ENCODE measurements at regions of chr18 and their contacts with region 1.

Region 1: DNA sequence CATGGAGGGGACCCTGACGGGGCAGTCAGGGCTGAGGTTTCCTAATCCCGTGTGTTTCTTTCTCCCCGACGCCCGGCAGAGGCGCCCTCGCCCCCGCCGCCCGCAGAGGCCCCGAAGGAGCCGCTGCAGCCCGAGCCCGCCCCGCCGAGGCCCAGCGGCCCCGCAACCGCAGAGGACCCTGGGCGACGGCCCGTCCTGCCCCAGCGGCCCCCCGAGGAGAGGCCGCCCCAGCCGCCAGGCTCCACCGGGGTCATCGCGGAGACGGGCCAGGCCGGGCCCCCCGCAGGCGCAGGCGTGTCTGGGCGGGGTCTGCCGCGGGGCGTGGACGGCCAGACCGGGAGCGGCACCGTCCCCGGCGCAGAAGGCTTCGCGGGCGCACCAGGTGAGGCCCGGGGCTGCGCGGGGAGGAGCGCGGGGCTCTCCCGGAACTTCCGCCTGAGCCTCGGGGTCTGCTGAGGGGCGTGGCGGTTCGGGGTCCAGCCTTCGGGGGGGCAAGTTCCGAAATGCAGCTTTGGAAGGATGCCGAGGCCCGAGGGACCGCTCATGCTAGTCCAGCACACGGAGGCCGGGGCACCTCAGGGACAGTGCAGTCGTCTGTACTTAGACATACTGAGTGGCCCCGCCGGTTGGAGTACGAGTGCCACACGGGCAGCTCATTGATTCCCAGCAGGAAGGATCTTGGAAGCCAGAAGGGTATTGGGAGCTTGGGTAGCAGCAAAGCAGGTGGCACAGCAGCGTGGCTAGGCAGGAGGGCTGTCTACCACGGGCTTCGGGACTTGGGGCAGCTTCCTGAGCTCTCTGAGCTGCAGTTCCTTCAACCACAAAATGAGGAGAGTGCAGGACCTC is 60.1 kb downstream of the EMILIN2 start:
- DNase-seq: peak; percentile 48 to 73 (median 68)
- H3K4me3 ChIP-seq: peak overlapping the region; percentile 66
- H3K27ac ChIP-seq: peak overlapping the region; percentile 78 to 87
- H3K4me1 ChIP-seq: peaks cover 7% of the 10 kb centered on the region
- H3K27me3 ChIP-seq: no peaks in the 10 kb centered on the region
- CTCF ChIP-seq: peak in 2 of 3 donors; percentile 23 to 46
- EP300 ChIP-seq: no peak
- POLR2A ChIP-seq: peak; percentile 26

Region 2: GRCh38 chr18:2758309-2758708 is 148.6 kb before region 1 on chr18:
- intact Hi-C with region 1: loop called in 1 of 4 experiments (anchors 10 kb)
- DNase-seq: no peak
- H3K4me3 ChIP-seq: no peak overlapping the region
- H3K27ac ChIP-seq: no peak overlapping the region
- H3K4me1 ChIP-seq: no peaks in the 10 kb centered on the region
- H3K27me3 ChIP-seq: no peaks in the 10 kb centered on the region
- CTCF ChIP-seq: no peak
- EP300 ChIP-seq: no peak
- POLR2A ChIP-seq: no peak

Region 3: DNA sequence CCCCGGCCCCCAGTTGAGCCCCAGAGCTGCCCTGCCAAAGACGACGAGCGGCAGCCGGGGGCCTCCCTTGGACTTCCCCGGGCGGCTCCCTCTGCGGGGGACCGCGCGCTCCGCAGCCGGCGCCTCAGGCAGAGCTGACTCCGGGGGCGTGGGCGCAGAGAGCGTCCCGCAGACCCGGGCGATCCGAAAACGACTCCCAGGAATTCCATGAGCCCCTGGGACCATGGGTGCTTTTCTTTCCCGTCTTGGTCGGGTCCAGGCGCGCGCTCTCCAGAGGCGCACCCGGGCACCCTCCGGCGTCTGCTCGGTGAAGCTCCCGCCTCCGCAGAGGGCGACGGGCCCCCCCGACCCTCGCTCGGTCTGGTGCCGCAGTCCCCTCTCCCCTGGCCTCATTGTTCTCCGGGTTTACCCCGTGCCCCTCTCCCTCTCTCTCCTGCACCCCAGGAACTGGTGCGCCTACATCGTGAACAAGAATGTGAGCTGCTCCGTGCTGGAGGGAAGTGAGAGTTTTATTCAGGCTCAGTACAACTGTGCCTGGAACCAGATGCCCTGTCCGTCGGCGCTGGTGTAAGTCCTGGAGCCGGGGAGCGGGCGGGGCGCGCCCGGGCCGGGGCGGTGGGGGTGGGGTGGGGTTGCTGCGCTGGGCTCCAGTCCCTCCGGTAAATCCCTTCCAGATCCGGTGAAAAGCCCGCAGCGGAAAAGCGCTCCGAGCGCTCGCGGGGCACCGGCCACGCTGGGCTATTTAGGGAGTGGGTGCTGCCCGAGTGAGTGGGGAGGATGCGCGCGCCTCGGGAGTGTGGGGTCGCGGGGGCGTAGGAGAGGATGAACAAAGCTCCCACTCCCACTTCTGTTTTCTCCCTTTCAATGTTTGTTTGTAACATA is 59.3 kb before region 1 on chr18:
- intact Hi-C with region 1: loop called in 2 of 4 experiments (anchors 2 to 10 kb)
- DNase-seq: peak; percentile 44 to 73 (median 62)
- H3K4me3 ChIP-seq: peak overlapping the region; percentile 56
- H3K27ac ChIP-seq: peak overlapping the region; percentile 65 to 83
- H3K4me1 ChIP-seq: peaks cover 4% of the 10 kb centered on the region
- H3K27me3 ChIP-seq: no peaks in the 10 kb centered on the region
- CTCF ChIP-seq: no peak
- EP300 ChIP-seq: no peak
- POLR2A ChIP-seq: no peak

Region 4: GRCh38 chr18:2857491-2858131 is 49.3 kb before region 1 on chr18:
- intact Hi-C with region 1: loop called in 1 of 4 experiments (anchors 10 kb)
- DNase-seq: peak; percentile 87 to 94 (median 92)
- H3K4me3 ChIP-seq: no peak overlapping the region
- H3K27ac ChIP-seq: peak overlapping the region in 1 of 2 donors; percentile 71
- H3K4me1 ChIP-seq: peaks cover 7% of the 10 kb centered on the region
- H3K27me3 ChIP-seq: no peaks in the 10 kb centered on the region
- CTCF ChIP-seq: no peak
- EP300 ChIP-seq: peak; percentile 64
- POLR2A ChIP-seq: no peak

Region 5: GRCh38 chr18:3217948-3218647 is 311.2 kb after region 1 on chr18:
- intact Hi-C with region 1: no loop called
- DNase-seq: no peak
- H3K4me3 ChIP-seq: no peak overlapping the region
- H3K27ac ChIP-seq: no peak overlapping the region
- H3K4me1 ChIP-seq: no peaks in the 10 kb centered on the region
- H3K27me3 ChIP-seq: no peaks in the 10 kb centered on the region
- CTCF ChIP-seq: no peak
- EP300 ChIP-seq: no peak
- POLR2A ChIP-seq: no peak